BJ (cell line): ENCODE measurements at regions of chr1 and their contacts with region 1.

Region 1: DNA sequence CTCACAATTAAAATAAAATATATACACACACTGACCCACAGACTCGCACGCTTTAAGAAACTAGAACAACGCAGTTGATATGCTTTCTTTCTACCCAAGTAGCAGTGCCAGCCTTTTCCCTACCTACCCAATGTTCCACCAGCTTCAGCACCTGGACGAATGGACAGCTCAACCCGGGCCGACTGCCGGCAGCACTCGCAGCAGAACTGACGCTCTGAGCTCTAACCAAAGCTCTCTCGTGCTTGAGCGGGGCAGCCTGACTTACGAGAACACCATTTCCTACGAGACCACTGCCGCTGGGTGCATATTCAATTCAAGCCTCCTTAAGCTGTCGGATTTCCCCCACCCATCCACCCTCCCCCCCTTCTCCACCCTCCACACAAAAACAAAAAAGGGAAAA is 127.4 kb upstream of the DPYD start:
- DNase-seq: no peak
- H3K4me3 ChIP-seq: peak overlapping the region; percentile 38
- H3K27me3 ChIP-seq: no peaks in the 10 kb centered on the region
- CTCF ChIP-seq: 0 out of 2 replicates have a peak, but pooled peaks have one; percentile 19

Region 2: DNA sequence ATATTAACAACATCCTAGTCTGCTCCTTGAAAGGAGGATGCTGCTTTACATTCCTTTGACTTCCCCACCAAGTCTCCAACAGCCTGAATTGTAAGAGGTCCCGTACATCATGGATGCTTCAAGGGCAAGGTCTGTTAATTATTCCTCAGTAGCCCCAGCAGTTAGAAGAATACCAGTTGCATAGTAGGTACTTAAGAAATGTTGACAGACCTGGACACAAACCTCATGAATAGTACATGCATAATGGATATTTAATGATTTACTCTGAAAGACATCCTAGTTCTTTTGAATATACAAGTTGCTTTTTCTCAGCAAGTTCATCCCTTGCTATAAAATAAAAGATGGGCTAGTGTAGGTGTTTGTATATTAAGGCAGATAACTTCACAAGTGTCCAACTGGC is 15.3 kb before region 1 on chr1:
- CTCF ChIA-PET with region 1: no interaction called
- POLR2A ChIA-PET with region 1: no interaction called
- DNase-seq: no peak
- H3K4me3 ChIP-seq: no peak overlapping the region
- H3K27me3 ChIP-seq: no peaks in the 10 kb centered on the region
- CTCF ChIP-seq: no peak

Region 3: DNA sequence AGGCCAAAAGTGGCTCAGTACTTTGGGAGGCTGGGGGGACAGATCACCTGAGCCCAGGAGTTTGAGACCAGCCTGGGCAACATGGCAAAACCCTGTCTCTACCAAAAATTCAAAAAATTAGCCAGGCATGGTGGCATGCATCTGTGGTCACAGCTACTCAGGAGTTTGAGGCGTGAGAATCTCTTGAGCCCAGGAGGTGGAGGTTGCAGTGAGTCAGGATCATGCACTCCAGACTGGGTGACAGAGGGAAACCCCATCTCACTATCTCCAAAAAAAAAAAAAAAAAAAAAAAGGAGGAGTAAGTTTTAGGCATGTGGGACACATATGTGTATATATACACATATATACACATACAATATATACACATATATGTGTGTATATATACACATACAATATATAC is 37.9 kb after region 1 on chr1:
- CTCF ChIA-PET with region 1: interaction called, 4 read pairs
- POLR2A ChIA-PET with region 1: interaction called, 17 read pairs
- DNase-seq: no peak
- H3K4me3 ChIP-seq: no peak overlapping the region
- H3K27me3 ChIP-seq: no peaks in the 10 kb centered on the region
- CTCF ChIP-seq: no peak